ENCODE measurements at regions of chr7 and their contacts with region 1.

Region 1: GRCh38 chr7:68394131-68394530 is 1204.1 kb upstream of the AUTS2 start:
- DNase-seq: no peak
- ATAC-seq: no peak
- H3K4me3 ChIP-seq: no peak overlapping the region
- H3K27ac ChIP-seq: no peak overlapping the region
- H3K4me1 ChIP-seq: no peaks in the 10 kb centered on the region
- H3K27me3 ChIP-seq: no peaks in the 10 kb centered on the region
- CTCF ChIP-seq: no peak

Region 2: GRCh38 chr7:68200051-68200670 is 194.0 kb before region 1 on chr7:
- intact Hi-C with region 1: no loop called
- DNase-seq: no peak
- ATAC-seq: no peak
- H3K4me3 ChIP-seq: no peak overlapping the region
- H3K27ac ChIP-seq: no peak overlapping the region
- H3K4me1 ChIP-seq: no peaks in the 10 kb centered on the region
- H3K27me3 ChIP-seq: peaks cover 0 to 11% (median 0%) of the 10 kb centered on the region in 7 donors
- CTCF ChIP-seq: no peak

Region 3: DNA sequence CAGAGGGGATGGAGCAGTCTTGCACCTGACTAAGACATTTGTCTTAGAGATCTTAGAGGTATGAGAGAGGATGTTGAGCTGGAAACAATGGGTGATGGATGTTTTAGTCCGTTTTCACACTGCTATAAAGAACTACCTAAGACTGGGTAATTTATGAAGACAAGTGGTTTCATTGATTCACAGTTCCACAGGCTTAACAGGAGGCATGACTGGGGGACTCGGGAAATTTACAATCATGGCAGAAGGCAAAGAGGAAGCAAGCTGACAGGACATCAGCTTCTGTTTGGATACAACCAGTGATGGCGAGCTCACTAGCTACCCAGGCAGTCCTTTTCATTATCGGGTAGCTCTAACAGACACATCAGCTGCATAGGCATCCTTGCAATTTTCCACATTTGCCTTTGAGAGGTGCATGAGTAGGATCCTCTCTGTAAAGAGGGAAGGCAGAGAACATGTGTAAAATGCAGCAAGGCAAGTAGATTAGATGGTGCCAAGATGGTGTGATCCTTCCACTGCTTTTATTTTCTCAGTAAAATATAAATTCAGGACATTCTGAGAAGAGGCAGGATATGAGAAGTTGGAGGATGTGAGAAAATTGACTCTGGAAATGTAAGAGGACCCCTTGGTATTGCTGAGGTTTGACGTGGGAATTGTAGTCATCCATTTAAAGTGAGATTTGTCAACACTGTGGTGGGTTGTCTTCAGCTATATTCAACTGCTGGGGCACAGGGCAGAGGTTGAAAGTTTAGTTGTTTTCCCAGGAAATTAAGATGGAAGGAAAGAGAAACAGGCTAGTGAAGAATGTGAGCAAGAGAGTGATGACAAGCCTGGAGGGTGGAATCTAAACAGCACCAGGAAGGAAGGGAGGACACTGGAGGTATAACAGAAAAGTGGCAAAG is 64.1 kb after region 1 on chr7:
- intact Hi-C with region 1: loop called in 1 of 10 experiments (anchors 10 kb)
- DNase-seq: no peak
- ATAC-seq: no peak
- H3K4me3 ChIP-seq: no peak overlapping the region
- H3K27ac ChIP-seq: no peak overlapping the region
- H3K4me1 ChIP-seq: no peaks in the 10 kb centered on the region
- H3K27me3 ChIP-seq: peaks cover 0 to 10% (median 0%) of the 10 kb centered on the region in 7 donors
- CTCF ChIP-seq: no peak